AG04449 (cell line): ENCODE measurements at regions of chr7 and their contacts with region 1.

Region 1: GRCh38 chr7:17009007-17009719 is 127.4 kb upstream of the AGR3 start:
- DNase-seq: no peak
- H3K4me3 ChIP-seq: no peak overlapping the region
- CTCF ChIP-seq: no peak

Region 2: DNA sequence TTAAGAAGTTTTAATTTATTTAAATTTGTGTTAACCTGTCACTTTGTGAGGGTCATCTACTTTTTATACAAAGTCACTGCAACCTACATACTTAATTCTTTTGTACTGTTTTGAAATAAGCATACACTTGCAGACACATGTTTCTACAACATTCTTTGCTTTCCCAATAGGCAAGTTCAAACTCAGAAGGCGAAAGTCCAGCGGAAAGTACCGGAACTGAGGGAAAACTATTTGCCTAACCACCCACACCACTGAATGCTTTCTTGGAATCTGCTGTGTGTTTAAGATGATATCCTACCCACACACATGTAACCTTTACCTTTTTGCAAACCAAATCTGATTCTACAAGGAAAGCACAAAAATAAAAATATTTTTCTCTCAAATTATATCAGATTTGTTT is 12.0 kb after region 1 on chr7:
- CTCF ChIA-PET with region 1: no interaction called
- POLR2A ChIA-PET with region 1: no interaction called
- DNase-seq: no peak
- H3K4me3 ChIP-seq: no peak overlapping the region
- CTCF ChIP-seq: no peak

Region 3: DNA sequence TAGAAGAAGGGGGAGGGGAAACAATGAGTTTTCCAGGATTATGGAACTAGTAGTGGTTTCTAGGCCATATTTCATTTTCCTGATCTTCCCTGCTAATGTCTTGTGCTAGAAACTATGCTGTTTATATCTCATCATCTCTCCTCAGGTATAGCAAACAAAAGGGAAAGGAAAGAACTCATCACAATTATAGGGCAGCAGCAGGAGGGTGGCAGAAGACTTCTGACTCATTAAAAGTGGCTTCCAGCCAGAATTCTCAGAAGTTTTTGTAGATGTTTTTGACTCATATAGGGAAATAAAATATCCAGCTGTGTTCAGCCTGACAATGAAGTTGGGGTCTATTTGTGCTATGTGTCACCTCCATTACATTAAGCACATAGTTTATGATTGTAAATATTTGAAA is 295.8 kb after region 1 on chr7:
- CTCF ChIA-PET with region 1: interaction called, 14 read pairs
- POLR2A ChIA-PET with region 1: no interaction called
- DNase-seq: peak; percentile 37
- H3K4me3 ChIP-seq: no peak overlapping the region
- CTCF ChIP-seq: no peak